ENCODE measurements at regions of chr3 and their contacts with region 1.

Region 1: GRCh38 chr3:150775091-150775501 is 12.1 kb upstream of the SIAH2 start:
- DNase-seq: no peak
- ATAC-seq: no peak
- H3K4me3 ChIP-seq: no peak overlapping the region
- H3K27ac ChIP-seq: no peak overlapping the region
- H3K4me1 ChIP-seq: peaks cover 0 to 5% (median 0%) of the 10 kb centered on the region in 12 donors
- H3K27me3 ChIP-seq: no peaks in the 10 kb centered on the region
- CTCF ChIP-seq: no peak
- POLR2A ChIP-seq: no peak

Region 2: GRCh38 chr3:150737874-150738713 is 37.0 kb before region 1 on chr3:
- intact Hi-C with region 1: loop called in 1 of 10 experiments (anchors 5 kb)
- DNase-seq: no peak
- ATAC-seq: peak in 1 of 4 donors; percentile 40
- H3K4me3 ChIP-seq: no peak overlapping the region
- H3K27ac ChIP-seq: peak overlapping the region in 4 of 12 donors; percentile 9 to 70 (median 14)
- H3K4me1 ChIP-seq: peaks cover 0 to 64% (median 29%) of the 10 kb centered on the region in 12 donors
- H3K27me3 ChIP-seq: no peaks in the 10 kb centered on the region
- CTCF ChIP-seq: no peak
- POLR2A ChIP-seq: no peak

Measured in heart left ventricle (tissue), 16 donors.